ENCODE measurements at regions of chr19 and their contacts with region 1.

Region 1: GRCh38 chr19:35545001-35545911 is at the start of gene TMEM147:
- DNase-seq: peak; percentile 84
- H3K4me3 ChIP-seq: peak within 1 kb of the TSS; percentile 88 to 90 (median 89)
- H3K27ac ChIP-seq: peak within 1 kb of the TSS; percentile 84
- H3K4me1 ChIP-seq: peaks cover 7% of the 10 kb centered on the region
- H3K27me3 ChIP-seq: no peaks in the 10 kb centered on the region
- CTCF ChIP-seq: no peak
- total RNA-seq, gene TMEM147: 79.4 to 99.0 TPM

Region 2: DNA sequence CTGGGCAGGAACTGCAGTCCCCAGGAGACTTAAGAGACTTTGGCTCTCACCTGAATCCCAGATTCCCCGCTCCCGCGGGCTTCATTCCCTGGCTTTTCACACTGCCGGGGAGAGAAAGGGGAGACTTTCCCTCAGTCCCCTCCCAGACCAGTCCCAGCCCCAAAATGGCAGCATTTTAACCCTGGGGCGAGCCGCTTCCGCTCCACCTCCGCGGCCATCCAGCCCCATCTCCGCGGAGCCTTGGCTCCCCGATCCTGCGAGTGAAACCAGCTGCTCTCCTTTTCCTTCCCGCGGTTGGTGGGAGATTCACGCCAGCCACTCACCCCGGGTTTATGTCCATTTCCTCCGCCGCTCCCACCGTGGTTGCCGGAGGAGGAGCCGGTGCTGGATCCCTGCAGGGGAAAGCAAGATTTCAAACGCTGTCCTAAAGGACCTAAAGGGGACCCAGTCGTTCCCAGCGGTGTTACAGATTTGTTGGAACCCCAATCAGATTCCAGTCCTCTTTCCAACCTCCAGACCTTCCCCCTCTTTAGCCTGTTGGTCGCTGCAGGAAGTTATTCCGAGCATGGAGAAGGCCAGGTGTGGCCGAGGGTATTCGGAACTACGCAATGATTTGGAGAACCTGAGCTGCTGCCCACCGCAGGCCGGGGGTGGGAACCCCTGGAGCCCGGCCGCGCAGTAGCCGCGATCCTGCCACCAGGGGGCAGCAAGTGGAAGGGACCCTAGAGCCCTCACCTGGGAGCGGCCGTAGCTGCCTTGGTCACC is 35.2 kb before region 1 on chr19:
- CTCF ChIA-PET with region 1: interaction called, 3 read pairs
- dilution Hi-C with region 1: no loop called
- in situ Hi-C with region 1: loop called in 1 of 2 experiments (anchors 5 kb)
- intact Hi-C with region 1: loop called (anchors 1 kb)
- DNase-seq: peak; percentile 82
- H3K4me3 ChIP-seq: peak overlapping the region; percentile 52 to 75 (median 75)
- H3K27ac ChIP-seq: peak overlapping the region; percentile 95
- H3K4me1 ChIP-seq: peaks cover 21% of the 10 kb centered on the region
- H3K27me3 ChIP-seq: no peaks in the 10 kb centered on the region
- CTCF ChIP-seq: peak; percentile 88 to 98

Region 3: DNA sequence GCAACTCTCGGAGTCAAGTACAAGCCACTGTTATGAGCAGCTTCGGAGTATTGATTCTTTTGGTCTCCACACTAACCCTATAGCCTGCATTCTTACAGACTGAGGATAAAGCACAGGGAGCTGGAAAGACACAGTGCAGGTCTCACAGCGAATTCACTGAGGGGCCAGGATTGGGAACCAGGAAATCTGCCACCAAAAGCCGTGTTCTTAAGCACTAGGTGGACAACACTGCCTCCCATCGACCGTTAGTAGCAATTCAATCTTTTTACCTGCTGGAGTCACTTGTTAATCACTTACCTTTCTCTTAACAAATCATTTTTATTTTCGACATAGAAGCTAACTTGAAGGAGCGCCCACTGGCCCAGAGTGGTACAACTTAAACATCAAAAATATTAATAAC is 47.0 kb after region 1 on chr19:
- CTCF ChIA-PET with region 1: no interaction called
- dilution Hi-C with region 1: no loop called
- in situ Hi-C with region 1: no loop called
- intact Hi-C with region 1: loop called (anchors 1 kb)
- DNase-seq: peak; percentile 24
- H3K4me3 ChIP-seq: no peak overlapping the region
- H3K27ac ChIP-seq: no peak overlapping the region
- H3K4me1 ChIP-seq: no peaks in the 10 kb centered on the region
- H3K27me3 ChIP-seq: no peaks in the 10 kb centered on the region
- CTCF ChIP-seq: peak; percentile 39 to 76

Region 4: DNA sequence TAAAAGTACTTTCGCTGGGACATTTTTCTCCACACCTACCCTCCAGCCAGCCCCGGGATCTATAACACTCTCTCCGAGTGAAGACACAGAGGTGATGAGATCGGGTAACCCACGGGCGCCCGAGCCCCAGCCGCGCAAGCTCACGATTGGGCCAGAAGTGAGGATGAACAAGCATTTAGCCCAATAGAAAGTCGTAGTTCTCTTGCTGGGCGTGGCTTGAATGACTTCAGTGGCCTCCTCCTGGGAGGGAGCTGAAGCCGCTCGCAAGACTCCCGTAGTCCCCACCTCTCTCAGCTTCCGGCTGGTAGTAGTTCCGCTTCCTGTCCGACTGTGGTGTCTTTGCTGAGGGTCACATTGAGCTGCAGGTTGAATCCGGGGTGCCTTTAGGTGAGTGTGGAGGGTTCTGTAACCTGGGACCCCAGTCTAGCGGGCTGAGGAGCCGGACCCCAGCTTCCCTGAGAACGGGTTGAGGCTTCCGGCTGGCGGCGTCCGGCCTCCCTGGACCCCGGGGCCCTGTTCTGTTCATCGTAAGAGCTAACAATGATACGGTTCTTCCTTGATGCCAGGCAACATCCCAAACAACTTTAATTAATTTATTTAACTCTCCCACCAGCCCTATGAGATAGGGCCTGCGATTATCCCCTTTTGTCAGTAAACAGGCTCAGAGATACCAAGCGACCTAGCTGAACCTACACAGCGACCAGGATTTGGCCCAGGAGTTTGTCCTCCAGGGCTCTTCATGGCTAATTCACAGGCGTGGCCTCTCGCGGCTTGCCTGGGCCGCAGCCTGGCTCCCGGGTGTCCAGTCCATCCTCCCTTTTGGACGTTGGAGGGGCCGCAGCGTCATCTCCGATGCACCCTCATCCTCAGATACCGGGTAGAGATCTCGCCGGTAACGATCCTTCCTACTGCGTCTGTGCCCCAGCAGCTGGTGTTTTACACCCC is 103.0 kb after region 1 on chr19 and contains the start of gene COX6B1:
- CTCF ChIA-PET with region 1: no interaction called
- dilution Hi-C with region 1: no loop called
- in situ Hi-C with region 1: loop called in 1 of 2 experiments (anchors 5 kb)
- intact Hi-C with region 1: loop called (anchors 2 kb)
- DNase-seq: peak; percentile 96
- H3K4me3 ChIP-seq: peak within 1 kb of the TSS; percentile 63 to 85 (median 76)
- H3K27ac ChIP-seq: peak within 1 kb of the TSS; percentile 66
- H3K4me1 ChIP-seq: peaks cover 16% of the 10 kb centered on the region
- H3K27me3 ChIP-seq: no peaks in the 10 kb centered on the region
- CTCF ChIP-seq: no peak
- total RNA-seq, gene COX6B1: 201 to 275 TPM

Region 5: DNA sequence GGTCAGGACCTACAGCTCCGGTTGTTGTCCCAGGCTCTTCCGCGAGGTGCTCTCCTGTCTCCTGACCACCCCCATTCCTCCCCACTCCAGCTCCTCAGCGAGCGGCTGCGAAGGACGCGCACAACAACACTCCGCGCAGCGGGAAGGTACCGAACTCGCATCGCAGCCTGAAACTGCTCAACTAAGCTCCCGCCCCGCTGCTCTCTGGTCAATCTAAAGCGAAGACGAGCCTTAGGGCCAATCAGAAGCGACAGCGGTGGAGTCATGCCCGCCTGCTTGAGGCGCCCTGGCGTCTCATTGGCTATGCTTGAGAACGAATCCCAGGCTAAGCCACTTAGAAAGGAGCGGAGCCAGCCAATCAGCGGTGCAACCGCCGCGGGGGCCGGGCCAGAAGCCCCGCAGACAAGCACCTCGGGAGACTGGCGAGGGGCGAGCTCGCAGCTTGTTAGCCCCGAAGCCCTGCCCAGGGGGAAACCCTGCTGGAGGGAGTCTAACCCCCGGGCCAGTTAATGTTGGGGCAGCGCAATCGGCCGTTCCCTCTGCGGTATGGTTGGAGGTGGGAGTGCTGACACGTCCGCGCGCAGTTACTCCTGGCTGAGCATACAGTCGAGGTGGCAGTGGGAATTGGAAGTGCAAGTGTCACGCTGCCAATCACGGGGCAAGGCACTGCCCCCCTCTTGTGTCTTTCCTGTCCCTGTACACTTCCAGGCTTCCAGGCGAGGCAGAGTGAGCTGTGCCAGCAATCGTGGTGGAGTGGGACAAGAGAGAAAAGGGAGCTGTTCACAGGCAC is 157.2 kb after region 1 on chr19:
- CTCF ChIA-PET with region 1: no interaction called
- dilution Hi-C with region 1: no loop called
- in situ Hi-C with region 1: no loop called
- intact Hi-C with region 1: no loop called
- DNase-seq: peak; percentile 96
- H3K4me3 ChIP-seq: peak overlapping the region; percentile 69 to 74 (median 72)
- H3K27ac ChIP-seq: no peak overlapping the region
- H3K4me1 ChIP-seq: peaks cover 9% of the 10 kb centered on the region
- H3K27me3 ChIP-seq: no peaks in the 10 kb centered on the region
- CTCF ChIP-seq: no peak

Region 6: GRCh38 chr19:35931161-35931873 is 386.1 kb after region 1 on chr19:
- CTCF ChIA-PET with region 1: no interaction called
- dilution Hi-C with region 1: no loop called
- in situ Hi-C with region 1: no loop called
- intact Hi-C with region 1: loop called (anchors 5 kb)
- DNase-seq: peak; percentile 99
- H3K4me3 ChIP-seq: peak overlapping the region; percentile 23 to 43 (median 37)
- H3K27ac ChIP-seq: no peak overlapping the region
- H3K4me1 ChIP-seq: peaks cover 8% of the 10 kb centered on the region
- H3K27me3 ChIP-seq: no peaks in the 10 kb centered on the region
- CTCF ChIP-seq: peak; percentile 77 to 97

Measured in mammary epithelial cell (primary cell).